Left ventricle myocardium inferior (tissue), 1 donor: ENCODE measurements at regions of chr16 and their contacts with region 1.

Region 1: GRCh38 chr16:24036614-24037013 is 200.8 kb downstream of the PRKCB start:
- DNase-seq: no peak
- H3K4me3 ChIP-seq: no peak overlapping the region
- H3K27ac ChIP-seq: no peak overlapping the region
- H3K4me1 ChIP-seq: no peaks in the 10 kb centered on the region
- H3K27me3 ChIP-seq: peaks cover 93% of the 10 kb centered on the region
- CTCF ChIP-seq: peak; percentile 72

Region 2: GRCh38 chr16:22659933-22660332 is 1376.7 kb before region 1 on chr16:
- intact Hi-C with region 1: no loop called
- DNase-seq: no peak
- H3K4me3 ChIP-seq: no peak overlapping the region
- H3K27ac ChIP-seq: no peak overlapping the region
- H3K4me1 ChIP-seq: no peaks in the 10 kb centered on the region
- H3K27me3 ChIP-seq: peaks cover 44% of the 10 kb centered on the region
- CTCF ChIP-seq: no peak

Region 3: DNA sequence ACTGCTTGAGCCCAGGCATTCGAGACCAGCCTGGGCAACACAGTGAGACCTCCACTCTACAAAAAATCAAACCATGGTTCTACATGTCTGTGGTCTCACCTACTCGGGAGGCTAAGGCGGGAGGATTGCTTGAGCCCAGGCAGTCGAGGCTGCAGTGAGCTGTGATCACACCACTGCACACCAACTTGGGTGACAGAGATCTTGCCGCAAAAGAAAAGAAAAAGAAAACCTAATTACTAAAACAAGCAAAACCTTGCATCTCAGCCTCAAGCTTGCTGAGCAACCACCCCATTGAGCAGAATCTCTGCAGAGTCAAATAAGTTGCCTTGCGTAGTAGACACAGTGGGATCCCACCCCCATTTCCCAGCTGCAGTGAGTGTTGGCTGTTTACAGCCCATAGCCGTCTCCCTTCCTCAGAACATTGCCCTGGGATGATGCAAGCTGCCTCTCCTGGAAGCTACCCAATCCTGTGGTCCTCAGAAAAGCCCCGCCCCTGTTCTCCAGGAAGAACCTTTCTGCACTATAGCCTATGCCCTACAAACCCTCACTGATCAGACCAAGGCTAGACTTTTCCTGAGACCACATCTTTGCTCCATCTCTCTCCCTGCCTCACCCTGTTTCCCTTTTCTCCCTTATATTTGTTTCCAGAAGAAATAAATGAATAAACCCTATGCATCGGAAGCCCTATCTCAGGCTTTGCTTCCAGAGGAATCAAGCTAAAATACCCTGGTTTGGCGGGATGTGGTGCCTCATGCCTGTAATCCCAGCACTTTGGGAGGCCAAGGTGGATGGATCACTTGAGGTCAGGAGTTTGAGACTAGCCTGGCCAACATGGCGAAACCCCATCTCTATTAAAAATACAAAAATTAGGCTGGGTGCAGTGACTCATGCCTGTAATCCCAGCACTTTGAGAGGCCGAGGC is 306.9 kb before region 1 on chr16:
- intact Hi-C with region 1: loop called (anchors 10 kb)
- DNase-seq: no peak
- H3K4me3 ChIP-seq: no peak overlapping the region
- H3K27ac ChIP-seq: no peak overlapping the region
- H3K4me1 ChIP-seq: no peaks in the 10 kb centered on the region
- H3K27me3 ChIP-seq: peaks cover 45% of the 10 kb centered on the region
- CTCF ChIP-seq: no peak

Region 4: GRCh38 chr16:23803591-23804123 is 233.0 kb before region 1 on chr16:
- intact Hi-C with region 1: no loop called
- DNase-seq: peak; percentile 20
- H3K4me3 ChIP-seq: no peak overlapping the region
- H3K27ac ChIP-seq: no peak overlapping the region
- H3K4me1 ChIP-seq: no peaks in the 10 kb centered on the region
- H3K27me3 ChIP-seq: peaks cover 88% of the 10 kb centered on the region
- CTCF ChIP-seq: peak; percentile 49